Ovary (tissue), 10 donors: ENCODE measurements at regions of chrX and their contacts with region 1.

Region 1: DNA sequence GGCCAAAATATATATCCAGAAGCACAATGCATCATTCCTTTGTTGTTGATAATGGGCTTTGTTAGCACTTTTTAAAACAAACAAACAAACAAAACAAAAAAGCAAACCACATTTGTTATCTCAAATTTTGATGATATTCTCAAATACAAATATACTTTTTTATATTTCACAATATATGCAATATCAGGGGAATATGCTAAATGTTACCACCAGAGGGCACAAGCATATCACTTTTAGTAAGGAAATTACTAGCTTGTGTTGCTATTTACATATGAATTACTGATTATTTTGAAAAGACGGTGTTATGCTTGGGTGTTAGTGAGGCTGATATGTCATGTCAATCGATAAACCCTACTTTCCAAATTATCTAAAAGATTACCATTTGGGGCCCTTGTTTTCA is 29.1 kb downstream of the RIPPLY1 start:
- DNase-seq: no peak
- H3K4me3 ChIP-seq: no peak overlapping the region
- H3K27ac ChIP-seq: no peak overlapping the region
- H3K4me1 ChIP-seq: no peaks in the 10 kb centered on the region
- H3K27me3 ChIP-seq: no peaks in the 10 kb centered on the region
- CTCF ChIP-seq: peak in 2 of 3 donors; percentile 25 to 36
- EP300 ChIP-seq: no peak
- POLR2A ChIP-seq: no peak

Region 2: GRCh38 chrX:108270739-108271396 is 1396.8 kb after region 1 on chrX:
- intact Hi-C with region 1: loop called in 1 of 4 experiments (anchors 5 kb)
- DNase-seq: no peak
- H3K4me3 ChIP-seq: no peak overlapping the region
- H3K27ac ChIP-seq: no peak overlapping the region
- H3K4me1 ChIP-seq: no peaks in the 10 kb centered on the region
- H3K27me3 ChIP-seq: no peaks in the 10 kb centered on the region
- CTCF ChIP-seq: no peak
- EP300 ChIP-seq: no peak
- POLR2A ChIP-seq: no peak